PC-3 (cell line): ENCODE measurements at regions of chr7 and their contacts with region 1.

Region 1: DNA sequence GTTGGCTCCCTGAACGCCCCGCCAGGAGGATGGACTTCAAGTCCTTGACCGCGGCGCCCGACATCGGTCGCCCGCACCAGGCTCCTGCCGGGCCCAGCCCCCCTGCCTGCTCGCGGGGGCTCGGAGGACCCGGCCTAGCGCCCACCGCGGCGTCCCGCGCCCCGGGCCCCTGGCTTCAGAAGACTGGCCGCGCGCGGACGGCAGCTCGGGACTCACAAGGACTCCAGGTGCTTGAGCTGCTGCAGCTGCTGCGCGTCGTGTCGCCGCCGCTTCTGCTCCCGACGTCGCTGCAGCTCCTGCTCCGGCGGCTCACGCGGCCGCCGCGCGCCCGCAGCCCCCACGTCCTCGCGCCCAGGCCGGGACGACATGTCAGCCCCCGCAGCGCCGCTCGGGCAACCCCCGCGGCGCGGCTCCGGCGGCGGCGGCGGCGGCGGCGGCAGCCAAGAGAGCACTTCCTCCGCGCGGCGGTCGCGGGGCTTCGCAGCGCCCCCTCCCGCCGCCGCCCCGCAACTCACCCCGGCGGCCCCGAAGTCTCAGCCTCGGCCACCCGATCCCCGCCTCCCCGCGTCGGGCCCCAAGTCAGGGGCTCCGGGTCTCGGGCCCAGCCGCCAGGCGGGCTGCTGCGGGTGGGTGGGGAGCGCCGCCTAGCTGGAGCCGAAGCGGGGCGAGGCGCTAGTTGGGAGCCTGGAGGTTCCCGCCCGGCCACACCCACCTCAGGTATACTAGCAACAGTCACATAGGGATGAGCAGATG is at the start of gene RP9:
- DNase-seq: peak; percentile 71
- ATAC-seq: peak; percentile 84
- H3K4me3 ChIP-seq: peak within 1 kb of the TSS; percentile 99
- H3K27ac ChIP-seq: peak within 1 kb of the TSS; percentile 23; the same call in 1 of the 2 replicates
- H3K4me1 ChIP-seq: peaks cover 20% of the 10 kb centered on the region; the same call in 1 of the 2 replicates
- H3K27me3 ChIP-seq: no peaks in the 10 kb centered on the region
- CTCF ChIP-seq: peak; percentile 46; the same call in 1 of the 2 replicates
- total RNA-seq, gene RP9: 24.6 and 33.9 TPM in 2 replicates

Region 2: DNA sequence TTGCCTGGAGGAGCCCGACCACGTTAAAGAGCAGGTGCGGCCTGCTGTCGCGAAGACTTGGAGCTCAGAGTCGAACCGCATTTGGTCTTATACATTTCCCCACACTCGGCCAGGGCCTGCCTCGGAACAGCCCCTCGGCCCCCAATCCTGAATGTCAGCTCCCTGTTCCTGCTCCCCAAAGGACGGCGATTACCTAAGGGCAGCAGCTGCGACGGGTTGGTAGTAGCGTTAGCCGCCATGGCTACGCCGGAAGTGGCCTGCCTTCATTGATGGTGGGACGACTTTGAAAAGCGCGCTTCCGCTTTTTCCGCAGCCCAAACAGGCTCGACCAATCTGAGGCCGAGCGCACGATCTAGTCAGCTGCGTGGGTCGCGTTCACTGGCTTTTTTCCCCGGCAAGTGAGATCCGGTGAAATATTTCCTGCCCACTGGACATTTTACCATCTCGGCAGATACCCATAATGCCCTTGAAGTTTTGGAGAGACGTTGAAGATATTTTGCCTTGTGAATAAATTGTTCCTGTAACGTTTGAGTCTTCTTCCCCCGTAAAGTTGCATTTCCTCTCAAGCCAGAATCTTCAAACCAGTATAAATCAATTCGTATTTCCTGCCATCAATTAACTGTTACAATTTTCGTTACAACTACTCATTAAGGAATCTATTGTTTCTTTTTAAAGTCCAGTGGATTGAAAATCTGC is 618.9 kb before region 1 on chr7 and contains the start of gene LSM5:
- CTCF ChIA-PET with region 1: no interaction called
- POLR2A ChIA-PET with region 1: no interaction called
- intact Hi-C with region 1: loop called (anchors 1 kb)
- DNase-seq: peak; percentile 93
- ATAC-seq: peak; percentile 67
- H3K4me3 ChIP-seq: peak within 1 kb of the TSS; percentile 91
- H3K27ac ChIP-seq: peak within 1 kb of the TSS; percentile 70
- H3K4me1 ChIP-seq: peaks cover 14% of the 10 kb centered on the region; the same call in 1 of the 2 replicates
- H3K27me3 ChIP-seq: no peaks in the 10 kb centered on the region
- CTCF ChIP-seq: no peak
- total RNA-seq, gene LSM5: 24.8 and 38.9 TPM in 2 replicates

Region 3: GRCh38 chr7:32765185-32765584 is 344.0 kb before region 1 on chr7:
- CTCF ChIA-PET with region 1: no interaction called
- POLR2A ChIA-PET with region 1: no interaction called
- intact Hi-C with region 1: loop called (anchors 1 kb)
- DNase-seq: no peak
- ATAC-seq: no peak
- H3K4me3 ChIP-seq: no peak overlapping the region
- H3K27ac ChIP-seq: no peak overlapping the region
- H3K4me1 ChIP-seq: no peaks in the 10 kb centered on the region
- H3K27me3 ChIP-seq: no peaks in the 10 kb centered on the region
- CTCF ChIP-seq: no peak

Region 4: GRCh38 chr7:32846701-32847100 is 262.5 kb before region 1 on chr7:
- CTCF ChIA-PET with region 1: interaction called, 4 read pairs
- POLR2A ChIA-PET with region 1: no interaction called
- intact Hi-C with region 1: loop called (anchors 1 kb)
- DNase-seq: peak; percentile 81
- ATAC-seq: peak; percentile 100
- H3K4me3 ChIP-seq: no peak overlapping the region
- H3K27ac ChIP-seq: no peak overlapping the region
- H3K4me1 ChIP-seq: no peaks in the 10 kb centered on the region
- H3K27me3 ChIP-seq: no peaks in the 10 kb centered on the region
- CTCF ChIP-seq: peak; percentile 87

Region 5: GRCh38 chr7:32957326-32958045 is 151.7 kb before region 1 on chr7 and contains the start of gene FKBP9:
- CTCF ChIA-PET with region 1: interaction called, 3 read pairs
- POLR2A ChIA-PET with region 1: no interaction called
- intact Hi-C with region 1: loop called (anchors 5 kb)
- DNase-seq: peak; percentile 90
- ATAC-seq: peak; percentile 91
- H3K4me3 ChIP-seq: peak within 1 kb of the TSS; percentile 96
- H3K27ac ChIP-seq: peak within 1 kb of the TSS; percentile 41
- H3K4me1 ChIP-seq: peaks cover 14% of the 10 kb centered on the region
- H3K27me3 ChIP-seq: no peaks in the 10 kb centered on the region
- CTCF ChIP-seq: no peak
- total RNA-seq, gene FKBP9: 62.3 and 63.4 TPM in 2 replicates

Region 6: DNA sequence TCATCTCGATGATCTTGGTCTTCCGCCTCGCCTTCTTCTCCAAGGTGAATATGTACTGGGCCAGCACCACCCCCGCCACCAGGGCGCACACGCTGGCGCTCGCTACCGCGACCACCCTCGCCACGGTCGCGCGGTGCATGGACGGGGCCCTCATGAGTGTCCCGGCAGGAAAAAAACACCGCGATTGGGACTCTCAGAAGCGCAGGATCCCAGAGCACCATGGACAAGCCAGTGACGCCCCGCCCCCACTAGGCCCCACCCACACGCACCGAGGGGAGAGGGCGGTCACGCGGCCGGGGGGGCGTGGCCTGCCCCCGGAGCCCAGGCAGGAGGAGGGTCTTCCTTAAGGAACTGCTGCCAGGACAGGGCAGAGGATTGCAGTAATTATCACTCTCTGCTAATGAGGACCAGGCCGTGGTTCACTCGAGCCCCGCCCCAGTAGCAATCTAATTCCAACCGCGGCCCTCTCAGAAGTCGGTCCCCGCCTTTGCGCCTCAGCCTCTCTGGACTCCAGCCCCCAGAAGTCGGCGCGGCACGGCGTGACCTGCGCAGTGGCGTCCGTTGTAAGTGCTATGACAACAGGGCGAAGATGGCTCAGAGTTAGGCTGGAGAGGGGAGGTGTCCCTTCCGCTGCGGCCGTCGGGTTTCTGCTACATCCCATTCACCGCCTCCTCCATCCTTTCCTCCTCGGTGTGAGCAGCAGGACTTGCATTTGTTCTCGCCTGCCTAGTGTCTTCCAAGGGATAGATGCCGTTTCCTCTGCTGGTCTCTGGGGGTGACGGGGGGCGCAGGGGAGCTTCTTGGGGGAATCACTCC is 20.0 kb after region 1 on chr7 and contains the start of gene BBS9:
- CTCF ChIA-PET with region 1: no interaction called
- POLR2A ChIA-PET with region 1: no interaction called
- intact Hi-C with region 1: loop called (anchors 1 kb)
- DNase-seq: peak; percentile 92
- ATAC-seq: peak; percentile 99
- H3K4me3 ChIP-seq: peak within 1 kb of the TSS; percentile 85
- H3K27ac ChIP-seq: 0 out of 2 replicates have a peak within 1 kb of the TSS, but pooled peaks have one; percentile 12
- H3K4me1 ChIP-seq: peaks cover 11% of the 10 kb centered on the region
- H3K27me3 ChIP-seq: no peaks in the 10 kb centered on the region
- CTCF ChIP-seq: no peak
- total RNA-seq, gene BBS9: 5.7 and 13.0 TPM in 2 replicates